Activated CD4-positive, alpha-beta T cell treated with anti-CD3 and anti-CD28 coated beads for 36 hours (primary cell): ENCODE measurements at regions of chr3 and their contacts with region 1.

Region 1: DNA sequence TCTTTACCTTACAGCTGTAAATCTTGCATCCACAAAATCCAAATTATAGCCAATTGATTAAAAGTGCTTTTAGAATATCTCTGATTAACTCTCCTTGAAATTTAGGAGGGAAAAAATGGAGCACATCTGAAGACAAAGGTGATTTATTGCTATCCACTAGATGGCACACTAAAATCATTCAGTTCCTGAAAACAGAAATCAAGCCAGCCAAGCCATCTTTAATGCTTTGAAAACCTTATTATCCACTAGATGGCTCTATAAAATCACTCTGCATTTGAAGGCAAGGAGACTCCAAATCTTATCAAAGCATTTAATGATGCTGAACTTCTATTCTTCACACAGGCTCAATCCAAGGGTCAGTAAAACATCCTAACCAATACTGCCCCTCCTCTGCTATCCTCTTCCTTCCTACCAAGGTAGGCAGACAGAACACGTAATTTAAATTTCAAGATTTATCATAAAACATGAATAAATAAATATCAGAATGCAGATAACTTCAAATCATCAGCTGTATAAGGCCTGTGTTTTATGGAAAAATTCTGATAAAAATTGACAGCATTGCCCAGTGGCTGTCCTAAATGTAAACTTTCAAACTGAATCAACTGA is 48.4 kb downstream of the GOLIM4 start:
- DNase-seq: no peak
- ATAC-seq: peak; percentile 74
- H3K4me3 Mint-ChIP-seq: no peak overlapping the region
- H3K27ac Mint-ChIP-seq: no peak overlapping the region
- H3K4me1 Mint-ChIP-seq: no peaks in the 10 kb centered on the region
- H3K27me3 Mint-ChIP-seq: peaks cover 3% of the 10 kb centered on the region

Region 2: DNA sequence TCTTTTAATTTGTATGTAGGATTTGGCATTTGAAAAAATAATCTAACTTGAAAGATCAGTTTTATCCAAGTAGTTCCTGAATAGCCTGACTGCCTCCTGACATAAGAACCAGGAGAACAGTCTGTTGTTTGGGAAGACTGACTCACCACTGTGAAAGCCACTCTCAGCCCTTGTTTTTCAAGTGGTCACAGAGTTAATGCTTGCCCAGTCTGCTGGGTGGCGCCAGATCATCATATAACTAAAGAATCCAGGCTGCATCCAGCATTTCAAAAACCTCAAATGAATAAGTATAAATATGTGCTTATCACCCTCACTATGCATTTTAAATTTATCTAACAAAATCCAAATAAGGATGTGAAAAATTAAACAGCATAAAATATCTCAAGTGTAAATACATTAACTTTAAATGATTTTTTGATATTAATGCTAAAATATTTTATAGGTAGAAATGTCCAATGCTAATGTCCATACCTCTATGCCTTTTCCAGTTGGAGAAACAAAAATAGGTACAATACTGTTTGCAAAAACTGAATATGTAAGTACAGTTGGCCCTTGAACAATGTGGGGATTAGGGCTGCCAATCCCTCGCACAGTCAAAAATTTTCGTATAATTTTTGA is 640.3 kb before region 1 on chr3:
- CTCF ChIA-PET with region 1: no interaction called
- POLR2A ChIA-PET with region 1: no interaction called
- intact Hi-C with region 1: loop called in 1 of 2 experiments (anchors 10 kb)
- DNase-seq: peak; percentile 28
- ATAC-seq: peak; percentile 57
- H3K4me3 Mint-ChIP-seq: no peak overlapping the region
- H3K27ac Mint-ChIP-seq: no peak overlapping the region
- H3K4me1 Mint-ChIP-seq: no peaks in the 10 kb centered on the region
- H3K27me3 Mint-ChIP-seq: no peaks in the 10 kb centered on the region

Region 3: DNA sequence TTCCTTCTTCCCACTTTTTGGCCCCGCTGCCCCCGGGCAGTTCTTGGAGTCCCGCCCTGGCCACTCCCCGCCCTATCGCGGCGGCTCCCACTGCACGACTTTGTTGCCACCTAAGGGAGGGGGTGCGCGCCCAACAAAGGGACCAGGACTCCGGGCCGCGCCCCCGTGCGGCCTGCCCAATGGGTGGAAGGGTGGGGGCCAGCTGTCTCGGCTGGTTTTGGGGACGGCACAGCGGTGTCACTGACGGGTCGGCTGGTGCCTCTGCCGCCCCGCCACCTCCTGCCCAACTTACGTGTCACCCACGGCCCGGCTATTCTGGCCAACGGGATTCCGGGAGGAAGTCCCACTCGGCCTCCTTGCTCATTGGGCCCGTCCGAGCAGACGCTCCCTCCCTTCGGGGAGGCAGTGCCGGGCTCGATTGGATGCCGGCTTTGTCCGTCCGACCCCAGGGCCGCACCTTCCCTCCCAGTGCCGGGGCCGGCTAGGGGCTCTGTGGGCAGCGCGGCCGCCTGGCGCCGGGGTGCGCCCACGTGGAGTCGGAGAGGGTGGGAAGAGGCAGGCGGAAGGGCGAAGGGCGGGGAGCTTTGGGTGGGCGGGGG is 48.4 kb after region 1 on chr3 and contains the start of gene GOLIM4:
- CTCF ChIA-PET with region 1: no interaction called
- POLR2A ChIA-PET with region 1: no interaction called
- intact Hi-C with region 1: loop called in 1 of 2 experiments (anchors 2 kb)
- DNase-seq: peak; percentile 75
- ATAC-seq: peak; percentile 81
- H3K4me3 Mint-ChIP-seq: peak within 1 kb of the TSS; percentile 75
- H3K27ac Mint-ChIP-seq: peak within 1 kb of the TSS; percentile 66
- H3K4me1 Mint-ChIP-seq: peaks cover 10% of the 10 kb centered on the region
- H3K27me3 Mint-ChIP-seq: peaks cover 39% of the 10 kb centered on the region
- total RNA-seq, gene GOLIM4: 3.2 to 4.1 TPM

Region 4: GRCh38 chr3:168165390-168166269 is 118.3 kb after region 1 on chr3:
- CTCF ChIA-PET with region 1: interaction called, 58 read pairs
- POLR2A ChIA-PET with region 1: no interaction called
- intact Hi-C with region 1: loop called (anchors 1 kb)
- DNase-seq: peak; percentile 56
- ATAC-seq: peak; percentile 42
- H3K4me3 Mint-ChIP-seq: no peak overlapping the region
- H3K27ac Mint-ChIP-seq: no peak overlapping the region
- H3K4me1 Mint-ChIP-seq: no peaks in the 10 kb centered on the region
- H3K27me3 Mint-ChIP-seq: no peaks in the 10 kb centered on the region

Region 5: GRCh38 chr3:168467115-168467714 is 419.9 kb after region 1 on chr3:
- CTCF ChIA-PET with region 1: no interaction called
- POLR2A ChIA-PET with region 1: no interaction called
- intact Hi-C with region 1: loop called in 1 of 2 experiments (anchors 5 kb)
- DNase-seq: no peak
- ATAC-seq: no peak
- H3K4me3 Mint-ChIP-seq: no peak overlapping the region
- H3K27ac Mint-ChIP-seq: no peak overlapping the region
- H3K4me1 Mint-ChIP-seq: no peaks in the 10 kb centered on the region
- H3K27me3 Mint-ChIP-seq: no peaks in the 10 kb centered on the region

Region 6: DNA sequence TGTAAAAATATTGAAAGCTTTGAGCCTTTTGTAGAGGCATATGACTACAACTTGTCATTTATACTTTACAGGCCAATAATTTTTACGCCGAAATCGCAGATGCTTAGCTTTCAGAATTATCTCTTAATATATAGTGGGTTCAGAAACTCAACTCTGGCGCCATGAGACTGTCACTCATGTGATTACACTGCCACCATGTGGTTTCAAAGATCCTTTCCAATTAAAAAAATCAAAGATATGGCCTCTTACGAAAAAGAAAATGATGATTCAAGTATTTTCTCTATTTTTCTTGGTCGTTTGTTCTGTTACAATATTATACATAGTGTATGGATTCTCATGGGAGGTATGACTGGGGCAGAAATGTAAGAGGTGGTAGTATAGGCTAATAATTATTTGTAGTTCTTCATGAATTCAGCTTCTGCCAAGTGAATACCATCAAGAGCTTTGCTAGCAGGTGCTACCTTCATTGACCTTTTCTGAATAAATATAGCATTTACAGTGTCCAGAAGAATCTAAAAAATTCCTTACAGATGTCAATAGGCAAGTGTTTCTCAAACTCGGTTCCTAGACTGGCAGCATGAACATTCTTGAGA is 800.1 kb after region 1 on chr3:
- CTCF ChIA-PET with region 1: interaction called, 5 read pairs
- POLR2A ChIA-PET with region 1: no interaction called
- intact Hi-C with region 1: loop called (anchors 1 to 5 kb)
- DNase-seq: peak; percentile 11
- ATAC-seq: no peak
- H3K4me3 Mint-ChIP-seq: no peak overlapping the region
- H3K27ac Mint-ChIP-seq: no peak overlapping the region
- H3K4me1 Mint-ChIP-seq: no peaks in the 10 kb centered on the region
- H3K27me3 Mint-ChIP-seq: peaks cover 17% of the 10 kb centered on the region